ENCODE measurements at regions of chr3 and their contacts with region 1.

Region 1: DNA sequence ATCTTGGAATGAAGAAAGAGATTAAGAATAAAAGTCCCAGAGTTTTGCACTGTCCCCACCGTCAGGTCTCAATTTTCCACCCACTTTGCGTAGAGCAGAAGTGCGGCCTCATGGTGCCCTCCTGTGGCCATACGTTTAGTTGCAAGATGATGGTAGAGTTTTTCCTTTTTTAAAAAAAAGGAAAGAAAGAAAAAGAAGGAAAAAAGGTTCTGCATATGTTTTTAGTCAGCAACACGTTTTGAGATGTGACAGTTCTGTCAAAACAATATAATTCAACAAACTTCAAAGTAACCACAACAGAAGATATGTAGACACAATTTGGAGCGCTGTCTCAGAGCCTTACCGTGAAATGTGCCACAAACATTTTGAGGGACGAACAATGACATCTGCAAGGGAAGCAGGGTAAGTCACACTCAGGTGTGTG is 24.6 kb downstream of the EBLN2 start:
- DNase-seq: peak; percentile 16
- H3K4me3 Mint-ChIP-seq: no peak overlapping the region
- H3K27ac Mint-ChIP-seq: no peak overlapping the region
- H3K4me1 Mint-ChIP-seq: peaks cover 9% of the 10 kb centered on the region
- H3K27me3 Mint-ChIP-seq: peaks cover 5% of the 10 kb centered on the region

Region 2: DNA sequence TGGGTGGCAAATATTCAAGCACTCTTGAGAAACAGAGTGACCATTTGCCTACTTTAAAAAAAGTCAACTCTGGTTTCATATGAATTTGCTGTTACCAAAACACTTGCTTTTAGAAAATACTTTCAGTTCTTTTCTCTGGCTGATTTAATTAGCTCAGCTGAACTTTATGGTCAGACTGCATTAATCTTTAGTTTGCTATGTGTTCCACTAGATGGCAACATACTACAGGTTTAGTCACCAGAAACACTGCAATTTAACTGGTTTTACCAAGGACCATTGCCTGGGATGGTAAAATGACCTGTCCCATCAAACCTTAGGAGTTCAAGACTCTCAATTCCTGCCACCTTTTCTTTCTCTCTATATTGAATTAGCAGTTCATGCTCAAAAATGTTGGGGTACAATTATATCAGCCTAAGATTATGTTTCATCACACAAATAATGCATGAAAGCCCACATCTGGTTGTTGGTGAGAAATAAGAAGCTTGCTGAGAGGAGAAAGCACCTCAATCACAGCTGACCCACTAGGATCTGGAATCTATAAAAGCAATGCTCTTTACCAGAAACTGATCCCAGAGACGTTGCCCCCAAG is 1375.1 kb before region 1 on chr3:
- intact Hi-C with region 1: loop called (anchors 5 kb)
- DNase-seq: no peak
- H3K4me3 Mint-ChIP-seq: no peak overlapping the region
- H3K27ac Mint-ChIP-seq: no peak overlapping the region
- H3K4me1 Mint-ChIP-seq: peaks cover 56% of the 10 kb centered on the region
- H3K27me3 Mint-ChIP-seq: no peaks in the 10 kb centered on the region

Region 3: DNA sequence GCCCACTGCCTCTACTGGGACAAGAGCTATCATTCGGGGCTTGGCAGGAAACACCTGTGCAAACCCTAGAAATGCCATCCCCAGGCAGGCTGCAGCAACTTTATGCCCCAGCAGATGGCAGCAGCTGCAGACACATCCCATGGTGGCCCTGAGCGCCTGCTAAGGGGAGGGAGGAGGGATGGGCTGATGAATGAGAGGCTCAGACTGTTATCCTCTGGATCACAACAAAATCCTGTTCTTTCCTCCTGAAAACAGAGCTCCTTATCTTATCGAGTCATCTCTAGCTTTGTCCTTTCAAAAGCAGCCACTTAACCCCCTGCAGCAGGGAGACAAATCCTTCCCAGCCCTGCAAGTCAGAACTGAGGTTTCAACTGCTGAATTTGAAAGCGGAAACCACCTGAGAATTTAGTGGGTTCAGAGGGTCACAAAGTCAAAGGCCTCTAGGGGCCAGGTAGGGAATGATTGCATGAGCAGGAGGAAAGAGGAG is 1210.6 kb before region 1 on chr3:
- intact Hi-C with region 1: loop called (anchors 1 kb)
- DNase-seq: peak; percentile 67
- H3K4me3 Mint-ChIP-seq: no peak overlapping the region
- H3K27ac Mint-ChIP-seq: peak overlapping the region; percentile 59
- H3K4me1 Mint-ChIP-seq: peaks cover 38% of the 10 kb centered on the region
- H3K27me3 Mint-ChIP-seq: peaks cover 8% of the 10 kb centered on the region

Region 4: DNA sequence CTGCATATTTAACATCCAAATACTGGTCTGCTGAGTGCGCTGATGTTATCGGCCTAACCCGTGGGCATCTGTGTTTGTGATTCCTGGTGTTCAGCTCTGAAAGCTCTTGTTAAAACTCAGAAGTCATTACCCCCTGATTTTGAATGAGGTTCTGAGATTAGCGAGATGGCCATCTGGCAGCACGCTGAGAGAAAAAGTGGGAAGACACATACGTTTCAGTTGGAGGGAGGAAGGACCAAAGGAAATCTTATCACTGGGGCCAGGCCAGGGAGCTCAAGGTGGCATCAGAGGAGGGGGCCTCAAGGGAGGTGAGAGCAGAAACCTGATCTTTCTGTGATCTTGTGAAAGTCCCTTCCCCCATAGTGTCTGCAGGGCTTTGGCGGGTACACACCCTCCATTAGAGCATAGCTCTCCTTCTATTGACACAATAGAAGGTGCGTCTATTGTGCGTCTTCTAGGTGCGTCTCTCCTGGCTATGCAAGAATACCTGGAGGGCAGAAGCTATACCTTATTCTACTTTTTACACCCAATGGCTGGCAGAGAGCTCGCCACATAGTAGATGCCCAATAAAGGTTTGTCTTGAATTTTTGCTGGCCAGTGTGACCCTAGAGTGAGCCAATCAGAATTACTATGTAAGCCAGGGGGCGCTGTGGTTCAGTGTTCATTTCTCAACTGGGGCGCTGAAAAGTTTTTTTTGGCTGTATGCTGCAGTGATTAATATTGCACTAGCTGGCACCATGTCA is 420.2 kb before region 1 on chr3:
- intact Hi-C with region 1: loop called (anchors 2 kb)
- DNase-seq: peak; percentile 18
- H3K4me3 Mint-ChIP-seq: no peak overlapping the region
- H3K27ac Mint-ChIP-seq: no peak overlapping the region
- H3K4me1 Mint-ChIP-seq: peaks cover 5% of the 10 kb centered on the region
- H3K27me3 Mint-ChIP-seq: peaks cover 2% of the 10 kb centered on the region

Region 5: DNA sequence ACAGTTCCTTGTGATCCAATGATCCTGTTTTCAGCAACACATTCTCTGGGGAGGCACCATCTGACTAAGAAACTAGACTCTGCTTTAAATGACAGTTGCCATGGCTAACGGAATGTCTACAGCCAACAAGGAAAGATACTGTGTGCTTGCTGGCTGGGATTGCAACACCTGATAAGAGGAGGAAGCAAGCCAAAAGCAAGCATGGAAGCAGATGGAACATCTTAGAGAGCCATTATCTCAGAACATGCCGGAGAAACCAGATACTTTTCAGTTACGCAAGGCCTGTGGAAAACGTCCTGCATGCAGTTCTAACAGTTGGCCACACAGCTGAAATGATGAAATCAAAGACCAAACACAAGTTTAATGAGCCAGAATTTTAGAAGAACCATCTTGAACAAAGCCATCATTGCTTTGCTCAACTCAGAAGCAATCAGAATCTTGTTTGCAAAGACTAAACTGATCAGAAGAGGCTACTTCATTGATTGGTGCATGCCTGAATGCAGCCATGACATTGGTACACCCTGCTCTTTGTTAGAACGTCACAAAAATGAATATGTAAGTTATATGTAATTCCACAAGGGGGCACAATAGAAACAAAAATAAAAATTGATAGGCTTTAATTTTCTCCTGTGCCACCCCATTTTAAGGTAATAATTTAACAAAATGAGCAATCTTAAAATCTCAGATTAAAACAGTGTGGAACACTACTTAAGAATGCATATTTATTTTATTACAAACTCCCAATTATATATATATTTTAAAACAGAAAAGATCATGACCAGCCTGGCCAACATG is 147.4 kb before region 1 on chr3:
- intact Hi-C with region 1: loop called (anchors 1 kb)
- DNase-seq: no peak
- H3K4me3 Mint-ChIP-seq: no peak overlapping the region
- H3K27ac Mint-ChIP-seq: no peak overlapping the region
- H3K4me1 Mint-ChIP-seq: no peaks in the 10 kb centered on the region
- H3K27me3 Mint-ChIP-seq: peaks cover 10% of the 10 kb centered on the region

Region 6: GRCh38 chr3:73389117-73389813 is 303.2 kb after region 1 on chr3:
- intact Hi-C with region 1: no loop called
- DNase-seq: no peak
- H3K4me3 Mint-ChIP-seq: no peak overlapping the region
- H3K27ac Mint-ChIP-seq: no peak overlapping the region
- H3K4me1 Mint-ChIP-seq: no peaks in the 10 kb centered on the region
- H3K27me3 Mint-ChIP-seq: no peaks in the 10 kb centered on the region